Gastrocnemius medialis (tissue), 4 donors: ENCODE measurements at regions of chr9 and their contacts with region 1.

Region 1: GRCh38 chr9:109320742-109321448 is at the start of gene EPB41L4B:
- DNase-seq: peak; percentile 68 to 85
- ATAC-seq: peak; percentile 81 to 90
- H3K4me3 ChIP-seq: peak within 1 kb of the TSS; percentile 38 to 56 (median 46)
- H3K27ac ChIP-seq: peak within 1 kb of the TSS in 3 of 4 donors; percentile 16 to 58 (median 27)
- H3K4me1 ChIP-seq: peaks cover 14 to 16% of the 10 kb centered on the region in 2 donors
- H3K27me3 ChIP-seq: peaks cover 4 to 7% (median 4%) of the 10 kb centered on the region in 3 donors
- CTCF ChIP-seq: peak; percentile 84 to 99 (median 97)
- POLR2A ChIP-seq: no peak
- total RNA-seq, gene EPB41L4B: 3.8 to 6.9 (median 6.1) TPM

Region 2: DNA sequence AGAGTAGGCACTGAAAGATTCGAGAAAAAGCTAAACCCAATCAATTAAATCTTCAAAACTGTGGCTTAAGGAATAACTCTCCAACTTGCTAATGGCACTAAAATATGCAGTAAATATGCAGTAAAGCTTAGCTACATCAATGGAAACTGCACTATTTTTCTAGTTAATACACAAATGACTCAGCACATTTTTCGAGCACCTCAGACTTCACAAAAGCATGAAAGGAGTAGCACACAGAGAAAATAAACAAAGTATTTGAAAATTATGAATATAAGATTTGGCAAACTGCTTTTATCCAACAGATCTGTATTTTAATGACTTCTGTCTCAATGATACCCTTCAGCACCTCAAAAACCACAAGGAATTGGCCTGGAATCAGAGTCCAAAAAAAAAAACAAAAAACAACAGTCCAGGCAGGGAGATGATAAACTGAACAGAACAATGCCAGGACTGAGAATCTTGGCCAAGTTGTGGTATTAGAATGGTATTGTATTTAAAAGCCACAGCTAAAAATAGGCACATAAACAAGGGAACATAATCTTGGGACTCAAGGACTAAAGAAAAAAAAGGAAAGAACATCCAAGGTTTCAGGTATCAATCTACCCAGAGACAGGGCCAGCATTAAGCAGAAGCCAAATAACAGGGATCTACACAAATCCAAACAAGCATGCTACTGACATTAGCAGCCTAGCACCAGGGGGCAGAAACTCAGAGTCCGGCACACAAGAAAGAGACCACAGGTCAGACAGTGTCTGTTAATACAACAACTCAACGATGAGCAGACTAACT is 222.5 kb before region 1 on chr9:
- in situ Hi-C with region 1: loop called in 1 of 4 experiments (anchors 10 kb)
- intact Hi-C with region 1: loop called (anchors 10 kb)
- DNase-seq: peak; percentile 58 to 78
- ATAC-seq: peak; percentile 90 to 92
- H3K4me3 ChIP-seq: peak overlapping the region; percentile 8 to 21 (median 11)
- H3K27ac ChIP-seq: peak overlapping the region; percentile 83 to 86 (median 84)
- H3K4me1 ChIP-seq: peaks cover 88 to 93% of the 10 kb centered on the region in 2 donors
- H3K27me3 ChIP-seq: no peaks in the 10 kb centered on the region
- CTCF ChIP-seq: peak in 4 of 5 experiments; percentile 20 to 58 (median 44)
- POLR2A ChIP-seq: peak in 1 of 2 donors; percentile 32

Region 3: GRCh38 chr9:109182940-109183798 is 137.7 kb before region 1 on chr9:
- in situ Hi-C with region 1: no loop called
- intact Hi-C with region 1: loop called (anchors 2 kb)
- DNase-seq: no peak
- ATAC-seq: peak in 1 of 2 donors; percentile 42
- H3K4me3 ChIP-seq: no peak overlapping the region
- H3K27ac ChIP-seq: no peak overlapping the region
- H3K4me1 ChIP-seq: no peaks in the 10 kb centered on the region
- H3K27me3 ChIP-seq: no peaks in the 10 kb centered on the region
- CTCF ChIP-seq: peak in 1 of 5 experiments; percentile 6
- POLR2A ChIP-seq: no peak

Region 4: DNA sequence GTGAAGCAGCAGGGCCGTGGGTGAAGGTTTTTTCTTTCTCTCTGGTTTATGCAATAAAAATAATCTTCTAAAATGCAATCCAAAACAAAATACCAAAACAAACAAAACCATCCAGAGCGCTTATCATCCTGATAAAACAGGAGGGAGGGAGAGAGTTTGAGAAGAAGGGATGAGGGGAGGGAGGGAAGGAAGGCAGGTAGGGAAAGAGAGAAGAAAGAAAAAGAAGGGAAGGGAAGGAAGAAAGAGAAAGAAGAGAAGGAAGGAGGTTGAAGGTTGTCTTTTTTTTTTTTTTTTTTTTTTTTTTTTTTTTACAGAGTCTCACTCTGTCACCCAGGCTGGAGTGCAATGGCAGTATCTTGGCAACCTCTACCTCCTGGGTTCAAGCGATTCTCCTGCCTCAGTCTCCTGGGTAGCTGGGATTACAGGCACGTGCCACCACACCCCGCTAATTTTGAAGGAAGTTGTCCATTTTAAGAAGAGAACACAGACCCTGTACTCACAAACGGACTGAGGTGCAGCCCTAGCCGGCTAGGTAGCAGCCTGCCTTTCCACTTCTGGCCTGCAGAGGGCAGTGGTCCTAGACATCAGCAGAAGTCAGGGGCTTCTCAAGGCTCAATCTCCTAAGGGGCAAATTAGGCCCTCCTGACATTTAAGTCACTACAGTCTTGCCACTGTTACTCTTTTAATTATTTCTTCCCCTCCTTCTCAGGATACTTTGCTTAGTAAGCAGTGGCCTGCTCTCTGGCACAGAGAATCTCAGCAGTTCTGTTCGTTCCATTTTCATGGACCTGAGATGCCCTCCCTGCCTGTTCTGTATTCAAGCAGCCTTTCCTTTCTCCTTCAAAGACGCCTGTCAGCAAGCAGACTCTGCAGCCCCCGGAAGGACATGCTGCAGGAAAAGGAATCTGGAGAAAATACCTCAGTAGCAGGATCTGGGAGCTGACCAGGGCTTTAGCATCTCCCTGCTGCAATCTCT is 76.5 kb before region 1 on chr9:
- in situ Hi-C with region 1: loop called (anchors 5 to 10 kb)
- intact Hi-C with region 1: loop called (anchors 1 kb)
- DNase-seq: peak; percentile 23 to 64
- ATAC-seq: peak; percentile 65 to 89
- H3K4me3 ChIP-seq: no peak overlapping the region
- H3K27ac ChIP-seq: peak overlapping the region in 3 of 4 donors; percentile 18 to 72 (median 38)
- H3K4me1 ChIP-seq: peaks cover 0 to 11% of the 10 kb centered on the region in 2 donors
- H3K27me3 ChIP-seq: no peaks in the 10 kb centered on the region
- CTCF ChIP-seq: peak; percentile 73 to 94 (median 89)
- POLR2A ChIP-seq: no peak

Region 5: DNA sequence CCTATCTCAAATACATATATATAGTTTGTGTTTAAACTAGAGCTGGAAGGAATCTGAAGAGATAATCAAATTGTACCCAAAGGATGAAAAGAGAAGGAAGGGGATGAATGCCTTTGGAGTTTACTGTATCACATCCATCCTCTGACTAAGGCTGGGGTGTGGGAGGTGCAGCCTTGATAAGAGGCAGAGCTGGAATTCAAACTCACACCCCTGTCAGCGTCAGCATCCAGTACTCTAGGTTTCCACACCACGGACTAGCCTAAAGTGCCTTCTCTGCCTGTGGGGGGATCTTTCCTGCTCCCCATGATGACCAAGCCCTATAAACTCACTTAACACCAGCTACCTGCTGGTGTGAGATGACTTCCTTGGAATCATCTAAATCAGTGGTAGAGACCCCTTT is 48.1 kb before region 1 on chr9:
- in situ Hi-C with region 1: no loop called
- intact Hi-C with region 1: loop called (anchors 2 kb)
- DNase-seq: no peak
- ATAC-seq: no peak
- H3K4me3 ChIP-seq: no peak overlapping the region
- H3K27ac ChIP-seq: no peak overlapping the region
- H3K4me1 ChIP-seq: peaks cover 16 to 23% of the 10 kb centered on the region in 2 donors
- H3K27me3 ChIP-seq: no peaks in the 10 kb centered on the region
- CTCF ChIP-seq: no peak
- POLR2A ChIP-seq: no peak